ENCODE measurements at regions of chr16 and their contacts with region 1.

Region 1: GRCh38 chr16:3059000-3059722 is 6.3 kb upstream of the IL32 start:
- DNase-seq: peak; percentile 96

Region 2: DNA sequence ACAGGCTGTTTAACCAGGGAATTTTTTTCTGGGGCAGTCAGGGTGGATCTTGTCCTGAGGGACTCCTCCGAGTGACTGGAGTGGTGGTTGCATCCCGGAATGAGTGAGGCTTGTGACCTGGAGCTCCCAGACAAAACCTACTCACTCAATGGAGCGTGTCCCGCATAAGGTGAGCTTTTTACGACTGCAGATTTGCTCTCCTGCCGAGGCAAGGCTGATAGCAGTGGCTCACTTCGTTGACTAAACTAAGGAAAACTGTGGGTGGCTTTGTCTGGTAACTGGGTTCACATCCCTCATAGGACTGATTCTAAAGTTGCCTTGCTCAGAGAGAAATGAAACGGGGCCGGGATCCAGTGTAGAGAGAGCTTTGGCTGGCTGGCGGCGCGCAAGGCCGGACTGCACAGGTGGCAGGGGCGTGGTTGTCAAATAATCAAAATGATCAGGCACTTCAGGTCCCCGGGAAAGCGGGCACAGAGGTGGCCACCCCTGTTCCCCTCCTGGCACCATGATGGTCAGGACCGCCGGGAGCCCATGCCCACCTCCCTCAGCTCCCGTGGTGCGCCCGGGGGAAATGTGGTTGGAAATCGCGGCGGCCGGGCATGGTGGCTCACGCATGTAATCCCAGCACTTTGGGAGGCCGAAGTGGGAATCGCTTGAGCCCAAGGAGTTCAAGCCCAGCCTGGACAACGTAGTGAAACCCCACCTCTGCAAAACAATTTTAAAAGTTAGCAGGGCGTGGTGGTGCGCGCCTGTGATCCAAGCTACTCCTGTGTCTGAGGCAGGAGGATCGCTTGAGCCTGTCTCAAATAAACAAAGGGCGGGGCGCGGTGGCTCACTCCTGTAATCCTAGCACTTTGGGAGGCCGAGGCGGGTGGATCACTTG is 102.2 kb after region 1 on chr16:
- intact Hi-C with region 1: loop called (anchors 5 kb)
- DNase-seq: no peak

Region 3: DNA sequence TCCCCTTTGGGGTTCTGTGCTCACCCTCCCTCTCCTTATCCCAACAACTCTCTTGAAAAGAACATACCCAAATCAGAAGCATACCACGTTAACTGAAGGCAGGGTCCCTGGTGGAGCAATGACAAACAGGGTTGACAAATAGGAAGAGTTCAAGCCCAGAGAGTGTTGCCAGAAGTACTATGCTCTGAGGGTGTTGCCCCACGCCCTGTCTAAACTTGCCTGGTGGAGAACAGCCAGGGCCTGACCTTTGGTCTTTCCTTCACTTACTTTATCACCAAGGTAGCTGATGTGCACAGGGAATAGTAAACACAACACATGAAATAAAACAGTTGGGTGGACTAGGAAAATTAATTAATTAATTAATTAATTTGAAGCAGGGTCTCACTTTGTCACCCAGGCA is 269.5 kb after region 1 on chr16:
- intact Hi-C with region 1: no loop called
- DNase-seq: no peak

Region 4: DNA sequence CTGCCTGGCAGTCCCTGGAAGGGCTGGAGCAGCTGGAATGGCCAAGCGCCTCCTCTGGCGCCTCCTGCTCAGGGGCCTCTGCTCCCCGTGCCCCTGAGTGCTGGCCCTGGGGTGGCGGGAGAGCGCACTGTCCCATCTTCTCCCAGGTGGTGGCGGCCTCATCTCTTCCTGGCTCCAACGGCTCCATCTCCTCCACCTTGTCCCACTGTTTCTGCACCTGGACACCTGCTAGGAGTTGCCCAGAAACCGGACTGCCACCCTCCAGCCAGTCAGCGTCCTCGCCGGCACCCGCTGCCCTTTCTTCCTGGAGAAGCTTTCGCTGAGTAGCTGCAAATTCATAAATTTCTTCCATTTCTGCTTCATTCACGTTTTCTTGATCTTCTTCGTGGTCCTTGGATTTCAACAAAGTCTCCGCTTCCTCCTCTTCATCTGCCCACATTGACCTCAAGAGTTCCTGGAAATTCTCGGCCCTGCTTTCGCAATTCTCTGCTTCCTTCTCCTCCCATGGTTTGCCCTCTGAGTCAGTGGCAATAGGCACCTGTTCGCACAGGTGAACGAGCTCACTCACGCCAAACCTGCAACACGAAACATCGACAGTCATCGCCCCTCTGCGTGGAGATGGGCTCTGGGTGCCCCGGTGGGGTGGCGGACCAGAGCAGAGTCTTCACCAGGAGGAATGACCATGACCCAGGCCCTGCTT is 531.7 kb after region 1 on chr16:
- intact Hi-C with region 1: no loop called
- DNase-seq: peak; percentile 63